ENCODE measurements at regions of chr17 and their contacts with region 1.

Region 1: DNA sequence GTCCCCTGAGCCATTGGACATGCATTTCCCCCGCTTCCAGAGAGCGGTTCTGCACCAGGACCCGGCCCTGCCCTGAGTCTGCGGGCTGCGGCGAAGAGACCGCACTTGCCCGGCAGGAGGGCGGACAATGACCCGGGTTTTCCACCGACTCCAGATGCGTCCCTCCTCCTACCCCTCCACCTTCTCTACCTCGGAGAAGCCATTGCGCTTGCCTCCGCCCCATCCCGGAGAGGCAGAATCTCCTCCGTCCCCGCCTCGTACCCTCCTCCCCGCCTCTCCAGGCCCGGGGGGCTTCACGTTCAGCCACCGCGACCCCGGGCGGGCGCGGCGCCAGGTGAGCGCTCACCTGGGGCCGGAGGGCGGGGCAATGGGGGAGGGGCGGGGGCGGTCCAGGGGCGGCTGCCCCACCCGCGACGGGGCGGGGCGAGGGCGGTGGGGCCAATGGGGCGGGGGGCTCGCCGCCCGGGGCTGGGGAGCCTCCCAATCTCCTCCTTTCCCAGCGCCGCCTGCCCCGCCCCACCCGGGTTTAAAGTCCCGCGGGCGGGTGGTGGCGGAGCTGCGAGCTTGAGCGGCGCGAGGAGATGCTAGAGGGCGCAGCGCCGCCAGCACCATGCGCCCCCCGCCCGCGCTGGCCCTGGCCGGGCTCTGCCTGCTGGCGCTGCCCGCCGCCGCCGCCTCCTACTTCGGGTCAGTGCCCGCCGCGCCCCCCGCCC is at the start of gene WNT9B:
- DNase-seq: peak; percentile 23
- H3K4me3 ChIP-seq: peak within 1 kb of the TSS in 2 of 3 experiments; percentile 35 to 39
- H3K27ac ChIP-seq: no peak within 1 kb of the TSS
- H3K4me1 ChIP-seq: peaks cover 10% of the 10 kb centered on the region
- H3K27me3 ChIP-seq: peaks cover 19% of the 10 kb centered on the region
- CTCF ChIP-seq: no peak
- total RNA-seq, gene WNT9B: not detected

Region 2: GRCh38 chr17:46745376-46745775 is 105.8 kb before region 1 on chr17:
- CTCF ChIA-PET with region 1: interaction called, 4 read pairs
- dilution Hi-C with region 1: loop called (anchors 5 kb)
- in situ Hi-C with region 1: no loop called
- intact Hi-C with region 1: no loop called
- DNase-seq: no peak
- H3K4me3 ChIP-seq: no peak overlapping the region
- H3K27ac ChIP-seq: no peak overlapping the region
- H3K4me1 ChIP-seq: peaks cover 16% of the 10 kb centered on the region
- H3K27me3 ChIP-seq: no peaks in the 10 kb centered on the region
- CTCF ChIP-seq: no peak

Region 3: DNA sequence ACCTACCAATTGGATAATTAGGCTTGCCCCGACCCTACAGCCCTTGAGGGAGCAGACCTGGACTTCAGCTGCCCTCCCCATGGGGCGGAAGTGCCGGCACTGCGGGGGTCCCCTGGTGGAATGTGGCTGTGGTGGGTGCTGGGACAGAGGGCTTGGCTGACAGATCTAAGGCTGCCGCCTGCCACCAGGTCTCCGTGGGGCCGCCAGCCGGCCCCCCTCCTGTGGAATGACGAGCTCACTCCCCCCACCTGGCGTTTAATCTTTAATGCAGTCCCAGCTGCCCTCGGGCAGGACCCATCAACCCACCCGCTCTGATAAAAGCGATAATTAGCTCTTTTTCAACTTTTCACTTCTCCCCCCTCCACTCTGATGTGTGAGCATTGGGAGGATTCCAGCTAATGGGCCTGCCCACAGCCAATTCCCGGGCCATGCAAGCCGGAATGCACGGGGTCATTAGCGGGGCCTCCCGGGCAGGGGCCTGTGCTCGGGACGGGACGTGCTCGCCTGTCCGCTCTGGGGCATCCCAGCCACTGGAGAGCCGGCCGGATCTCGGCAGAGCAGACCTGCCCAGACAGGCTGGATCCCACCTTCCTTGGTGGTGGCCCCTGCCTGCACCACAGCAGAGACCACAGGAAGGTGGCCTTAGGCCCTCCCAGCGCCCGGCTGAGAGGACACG is 43.4 kb after region 1 on chr17:
- CTCF ChIA-PET with region 1: interaction called, 7 read pairs
- dilution Hi-C with region 1: loop called (anchors 5 kb)
- in situ Hi-C with region 1: no loop called
- intact Hi-C with region 1: no loop called
- DNase-seq: no peak
- H3K4me3 ChIP-seq: no peak overlapping the region
- H3K27ac ChIP-seq: no peak overlapping the region
- H3K4me1 ChIP-seq: no peaks in the 10 kb centered on the region
- H3K27me3 ChIP-seq: peaks cover 7% of the 10 kb centered on the region
- CTCF ChIP-seq: no peak

Region 4: GRCh38 chr17:46922804-46923635 is 71.8 kb after region 1 on chr17 and contains the start of gene GOSR2:
- CTCF ChIA-PET with region 1: no interaction called
- dilution Hi-C with region 1: no loop called
- in situ Hi-C with region 1: loop called in 1 of 2 experiments (anchors 10 kb)
- intact Hi-C with region 1: no loop called
- DNase-seq: peak; percentile 87
- H3K4me3 ChIP-seq: peak within 1 kb of the TSS; percentile 70 to 100 (median 99)
- H3K27ac ChIP-seq: peak within 1 kb of the TSS; percentile 95
- H3K4me1 ChIP-seq: peaks cover 12% of the 10 kb centered on the region
- H3K27me3 ChIP-seq: no peaks in the 10 kb centered on the region
- CTCF ChIP-seq: no peak
- total RNA-seq, gene GOSR2: 38.8 to 56.8 TPM

Region 5: DNA sequence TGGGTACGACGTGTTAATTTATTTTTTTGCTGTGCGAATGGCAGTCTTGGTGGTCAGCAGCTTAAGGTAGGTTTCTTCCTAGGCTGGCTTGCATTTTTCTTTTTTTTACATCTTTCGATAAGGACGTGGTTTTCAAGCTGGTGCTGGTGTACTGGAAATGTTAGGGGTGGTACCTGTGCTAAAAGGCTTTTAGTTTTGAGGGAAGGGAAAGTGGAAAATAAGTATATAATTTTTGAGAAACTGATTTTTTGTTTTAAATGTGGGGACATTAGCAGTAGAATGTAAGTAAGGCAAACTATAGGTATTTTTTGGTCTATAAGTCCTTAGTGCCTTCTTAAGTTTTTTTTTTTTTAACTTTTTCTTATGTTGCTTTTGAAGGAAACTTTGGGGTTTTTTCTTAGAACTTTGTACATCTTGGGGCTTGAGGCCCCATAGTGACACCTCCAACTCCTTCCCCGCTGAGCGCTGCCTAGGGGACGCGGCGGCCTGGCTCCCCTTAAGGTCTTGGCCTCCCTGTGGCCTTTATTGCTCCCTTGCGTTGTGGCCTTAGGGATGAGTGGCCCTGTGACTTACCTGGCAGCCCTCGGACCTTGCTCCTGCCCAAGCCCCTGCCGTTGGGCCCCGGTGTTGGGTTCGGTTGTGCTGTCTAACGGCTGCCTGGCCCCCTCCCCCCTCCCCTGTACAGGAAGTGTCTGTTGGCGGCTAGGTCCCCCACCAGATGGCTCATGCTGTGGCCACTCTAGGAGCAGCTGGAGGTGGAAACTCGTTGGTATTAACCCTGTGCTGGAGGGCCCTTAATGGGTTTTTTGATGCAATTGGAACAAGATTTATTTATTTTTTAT is 215.9 kb after region 1 on chr17:
- CTCF ChIA-PET with region 1: no interaction called
- dilution Hi-C with region 1: no loop called
- in situ Hi-C with region 1: no loop called
- intact Hi-C with region 1: no loop called
- DNase-seq: peak; percentile 82
- H3K4me3 ChIP-seq: peak overlapping the region; percentile 95 to 100 (median 99)
- H3K27ac ChIP-seq: peak overlapping the region; percentile 92
- H3K4me1 ChIP-seq: peaks cover 24% of the 10 kb centered on the region
- H3K27me3 ChIP-seq: no peaks in the 10 kb centered on the region
- CTCF ChIP-seq: peak in 1 of 2 donors; percentile 17

Measured in mammary epithelial cell (primary cell).